ENCODE measurements at regions of chr2 and their contacts with region 1.

Region 1: GRCh38 chr2:175948191-175948590 is 53.9 kb downstream of the LNPK start:
- DNase-seq: no peak
- ATAC-seq: no peak
- H3K4me3 ChIP-seq: no peak overlapping the region
- H3K27ac ChIP-seq: peak overlapping the region; percentile 7; the same call in 1 of the 2 replicates
- H3K4me1 ChIP-seq: no peaks in the 10 kb centered on the region
- H3K27me3 ChIP-seq: no peaks in the 10 kb centered on the region
- CTCF ChIP-seq: no peak

Region 2: GRCh38 chr2:175932675-175933074 is 15.5 kb before region 1 on chr2:
- CTCF ChIA-PET with region 1: no interaction called
- POLR2A ChIA-PET with region 1: interaction called, 17 read pairs
- in situ Hi-C with region 1: no loop called
- intact Hi-C with region 1: no loop called
- DNase-seq: no peak
- ATAC-seq: no peak
- H3K4me3 ChIP-seq: no peak overlapping the region
- H3K27ac ChIP-seq: no peak overlapping the region
- H3K4me1 ChIP-seq: no peaks in the 10 kb centered on the region
- H3K27me3 ChIP-seq: no peaks in the 10 kb centered on the region
- CTCF ChIP-seq: no peak

Region 3: DNA sequence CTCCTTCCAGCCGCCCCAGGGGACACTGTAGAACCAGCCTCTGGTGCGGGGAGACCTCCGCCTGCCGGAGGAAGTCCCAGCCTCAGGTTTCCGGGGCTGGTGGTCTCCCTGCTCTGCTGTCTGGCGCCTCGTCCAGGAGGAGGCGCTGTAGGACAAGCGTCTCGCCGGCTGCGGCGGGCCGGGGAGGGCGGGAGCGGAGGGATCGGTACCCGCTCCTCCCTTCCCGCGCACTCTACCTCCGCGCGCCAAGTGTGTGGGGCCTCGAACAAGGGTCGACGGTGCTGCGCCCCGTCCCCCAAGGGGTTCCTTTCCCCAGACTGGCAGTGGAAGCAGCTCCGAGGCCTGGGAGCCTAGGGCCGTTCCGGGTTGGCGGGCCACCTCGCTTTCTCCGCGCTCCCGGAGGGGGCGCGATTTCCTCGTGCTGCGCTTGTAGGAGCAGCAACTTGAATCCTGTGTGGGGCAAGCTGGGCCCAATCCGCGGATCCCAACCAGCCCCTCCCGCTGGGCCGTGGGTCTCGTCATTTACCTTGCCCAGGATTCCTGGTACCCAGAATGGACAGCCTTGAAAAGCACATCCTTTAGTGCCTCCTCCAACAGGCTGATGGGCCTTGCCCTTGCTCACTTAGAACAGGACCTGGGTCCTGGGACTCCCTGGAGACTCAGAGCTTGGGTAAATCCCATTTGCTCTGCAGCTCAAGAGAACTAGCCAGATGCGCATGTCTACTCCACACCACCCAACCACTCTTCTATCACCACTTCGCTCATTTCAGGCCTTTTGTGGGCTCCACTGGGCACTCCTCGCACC is 192.5 kb after region 1 on chr2:
- CTCF ChIA-PET with region 1: no interaction called
- POLR2A ChIA-PET with region 1: no interaction called
- in situ Hi-C with region 1: no loop called
- intact Hi-C with region 1: no loop called
- DNase-seq: no peak
- ATAC-seq: peak; percentile 92
- H3K4me3 ChIP-seq: peak overlapping the region; percentile 48 to 58
- H3K27ac ChIP-seq: peak overlapping the region; percentile 71
- H3K4me1 ChIP-seq: peaks cover 4% of the 10 kb centered on the region; the same call in 1 of the 2 replicates
- H3K27me3 ChIP-seq: no peaks in the 10 kb centered on the region
- CTCF ChIP-seq: peak; percentile 96

Measured in Panc1 (cell line).